ENCODE measurements at regions of chr10 and their contacts with region 1.

Region 1: DNA sequence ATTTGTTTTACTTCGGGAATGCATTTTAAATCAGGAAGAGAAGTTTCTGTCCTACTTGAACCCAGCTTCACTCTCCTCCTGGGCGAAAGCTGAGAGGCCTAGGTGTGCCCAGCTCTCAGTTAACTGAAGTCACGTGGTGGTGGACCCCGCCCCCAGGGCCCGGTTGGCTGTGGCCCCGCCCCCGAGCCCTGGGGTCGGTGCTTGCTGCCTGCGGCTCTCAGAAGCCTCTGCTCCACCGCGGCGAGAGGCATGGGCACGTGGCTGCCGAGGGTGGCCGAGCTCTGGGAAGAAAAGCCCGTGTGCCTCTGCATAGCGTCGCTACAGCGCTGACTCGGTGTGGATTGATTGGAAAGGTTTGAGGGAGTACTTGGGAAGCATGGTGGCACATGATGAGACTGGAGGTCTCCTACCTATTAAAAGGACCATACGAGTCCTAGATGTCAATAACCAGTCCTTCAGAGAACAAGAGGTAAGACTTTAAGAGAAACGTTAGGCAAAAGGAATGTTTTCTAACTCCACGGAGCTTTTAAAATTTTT is 34.1 kb downstream of the NET1 start:
- DNase-seq: peak; percentile 83
- H3K4me3 Mint-ChIP-seq: peak overlapping the region; percentile 89
- H3K27ac Mint-ChIP-seq: peak overlapping the region; percentile 87
- H3K4me1 Mint-ChIP-seq: peaks cover 57% of the 10 kb centered on the region
- H3K27me3 Mint-ChIP-seq: no peaks in the 10 kb centered on the region

Region 2: DNA sequence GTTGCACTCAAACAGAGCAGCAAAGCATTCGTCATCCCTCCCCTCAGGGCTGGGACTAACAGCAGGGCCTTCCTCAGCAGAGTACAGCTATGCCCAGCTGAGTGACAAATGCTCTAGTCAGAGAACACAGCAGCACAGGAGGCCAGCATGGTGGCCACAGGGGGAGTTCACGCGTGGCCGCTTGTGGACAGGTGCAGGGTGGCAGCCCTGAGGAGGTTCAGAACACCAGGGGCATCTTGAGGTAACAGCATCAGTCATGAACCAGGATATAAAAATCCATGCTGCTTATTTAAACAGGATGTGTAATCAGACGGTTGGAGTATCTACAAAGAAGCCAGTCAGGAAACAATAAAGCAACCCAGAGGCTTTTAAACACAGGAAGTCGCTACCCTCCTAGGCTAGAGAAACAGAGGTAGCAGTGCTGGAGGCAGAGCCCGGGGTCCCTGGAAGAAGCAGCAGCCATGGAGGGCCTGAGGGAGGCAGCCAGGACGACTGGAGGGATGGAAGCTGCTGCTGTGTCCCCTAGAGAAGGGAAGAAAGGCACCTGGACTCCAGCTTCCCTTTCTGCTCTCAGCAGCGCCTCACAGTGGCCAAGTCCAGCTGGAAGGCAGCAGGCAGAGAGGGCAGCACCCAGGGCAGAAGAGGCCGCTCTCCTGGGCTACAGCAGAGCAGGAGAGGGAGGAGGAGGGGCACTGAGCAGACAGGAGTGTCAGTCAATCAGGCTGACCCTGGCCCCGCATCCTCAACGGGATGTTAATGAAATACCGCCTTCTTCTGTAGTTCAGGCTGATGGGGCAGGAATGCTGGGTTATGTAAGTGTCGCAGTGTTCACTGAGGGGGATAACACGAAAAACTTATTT is 152.5 kb before region 1 on chr10:
- intact Hi-C with region 1: loop called (anchors 5 kb)
- DNase-seq: peak; percentile 66
- H3K4me3 Mint-ChIP-seq: peak overlapping the region; percentile 89
- H3K27ac Mint-ChIP-seq: peak overlapping the region; percentile 92
- H3K4me1 Mint-ChIP-seq: peaks cover 69% of the 10 kb centered on the region
- H3K27me3 Mint-ChIP-seq: no peaks in the 10 kb centered on the region

Region 3: GRCh38 chr10:5317547-5318107 is 128.8 kb before region 1 on chr10:
- intact Hi-C with region 1: no loop called
- DNase-seq: peak; percentile 30
- H3K4me3 Mint-ChIP-seq: peak overlapping the region; percentile 19
- H3K27ac Mint-ChIP-seq: peak overlapping the region; percentile 18
- H3K4me1 Mint-ChIP-seq: peaks cover 34% of the 10 kb centered on the region
- H3K27me3 Mint-ChIP-seq: no peaks in the 10 kb centered on the region

Region 4: DNA sequence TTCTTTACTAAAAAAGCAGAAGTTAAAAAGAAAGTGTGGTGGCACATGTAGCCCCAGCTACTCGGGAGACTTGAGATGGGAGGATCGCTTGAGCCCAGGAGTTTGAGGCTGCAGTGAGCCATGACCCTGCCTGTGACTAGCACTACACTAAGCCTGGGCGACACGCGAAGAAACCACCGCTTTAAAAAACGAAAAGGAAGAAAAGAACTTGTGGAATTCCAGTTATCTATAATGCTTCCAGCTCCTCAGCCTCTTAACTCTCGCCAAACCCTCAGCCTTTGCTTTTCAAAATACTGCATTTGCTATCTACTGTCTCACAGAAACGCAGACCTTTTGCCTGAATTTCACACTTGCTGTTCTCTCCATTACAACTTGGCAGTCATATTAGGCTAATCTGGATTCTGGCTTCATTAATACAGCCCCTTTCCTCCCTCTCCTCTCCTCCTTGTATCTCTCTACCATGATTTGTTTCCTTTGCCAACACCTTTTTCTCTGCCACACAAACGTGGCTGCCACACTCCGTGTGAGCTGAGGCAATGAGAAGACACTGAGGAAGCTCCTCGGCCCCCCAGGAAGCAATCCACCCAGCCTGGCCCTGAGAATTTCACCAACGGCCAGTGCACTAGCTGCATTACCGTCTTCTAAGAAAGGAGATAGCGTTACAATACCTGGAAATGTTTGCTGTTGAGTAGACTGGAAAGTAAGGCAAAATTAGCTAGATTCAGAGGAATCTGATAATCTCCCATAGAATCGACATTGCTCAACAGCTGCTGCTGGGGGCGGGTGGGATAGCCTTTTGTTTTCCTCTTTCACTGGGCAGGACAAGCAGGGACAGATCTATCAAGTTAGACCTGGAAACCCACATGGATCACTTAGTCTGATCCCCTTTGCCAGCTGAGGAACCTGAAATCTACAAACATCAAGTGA is 15.7 kb after region 1 on chr10:
- intact Hi-C with region 1: no loop called
- DNase-seq: no peak
- H3K4me3 Mint-ChIP-seq: no peak overlapping the region
- H3K27ac Mint-ChIP-seq: no peak overlapping the region
- H3K4me1 Mint-ChIP-seq: peaks cover 5% of the 10 kb centered on the region
- H3K27me3 Mint-ChIP-seq: no peaks in the 10 kb centered on the region

Region 5: DNA sequence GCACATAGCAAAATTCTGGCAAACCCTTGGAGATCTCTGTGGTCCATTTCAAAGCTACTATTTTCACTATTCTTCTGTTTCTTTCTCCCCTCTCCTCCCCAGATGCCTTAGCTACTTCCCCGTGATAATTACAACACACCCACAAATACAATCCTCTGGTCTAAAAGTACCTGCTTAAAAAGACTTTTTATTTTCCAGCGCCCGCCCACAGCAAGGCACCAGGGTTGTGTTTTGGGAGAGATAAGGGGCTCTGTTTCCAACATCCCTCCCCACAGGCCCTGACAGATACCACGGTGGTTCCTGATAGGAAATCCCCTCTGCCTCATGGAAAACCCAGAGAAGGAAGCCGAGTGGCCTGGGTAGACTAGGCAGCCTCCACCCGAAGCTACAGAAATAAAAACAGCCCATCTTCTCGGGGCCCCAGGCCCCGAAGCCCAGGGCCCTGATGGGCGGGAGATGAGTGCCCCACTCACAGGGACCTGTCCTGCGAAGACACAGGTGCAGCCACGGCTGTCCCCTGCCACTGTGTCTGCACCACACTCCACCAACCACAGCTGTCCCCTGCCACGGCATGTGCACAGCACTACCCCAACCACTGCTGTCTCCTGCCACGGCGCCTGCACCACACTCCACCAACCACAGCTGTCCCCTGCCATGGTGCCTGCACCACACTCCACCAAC is 33.2 kb after region 1 on chr10:
- intact Hi-C with region 1: no loop called
- DNase-seq: no peak
- H3K4me3 Mint-ChIP-seq: no peak overlapping the region
- H3K27ac Mint-ChIP-seq: no peak overlapping the region
- H3K4me1 Mint-ChIP-seq: peaks cover 4% of the 10 kb centered on the region
- H3K27me3 Mint-ChIP-seq: no peaks in the 10 kb centered on the region

Region 6: GRCh38 chr10:5623081-5623748 is 176.8 kb after region 1 on chr10:
- intact Hi-C with region 1: loop called (anchors 1 kb)
- DNase-seq: peak; percentile 73
- H3K4me3 Mint-ChIP-seq: no peak overlapping the region
- H3K27ac Mint-ChIP-seq: no peak overlapping the region
- H3K4me1 Mint-ChIP-seq: peaks cover 8% of the 10 kb centered on the region
- H3K27me3 Mint-ChIP-seq: peaks cover 2% of the 10 kb centered on the region

Region 7: GRCh38 chr10:5684318-5684970 is 238.0 kb after region 1 on chr10 and contains the start of gene TASOR2:
- intact Hi-C with region 1: loop called (anchors 5 kb)
- DNase-seq: peak; percentile 96
- H3K4me3 Mint-ChIP-seq: peak within 1 kb of the TSS; percentile 96
- H3K27ac Mint-ChIP-seq: peak within 1 kb of the TSS; percentile 97
- H3K4me1 Mint-ChIP-seq: peaks cover 51% of the 10 kb centered on the region
- H3K27me3 Mint-ChIP-seq: peaks cover 9% of the 10 kb centered on the region
- total RNA-seq, gene TASOR2: 60.1 and 68.7 TPM in 2 replicates

Region 8: GRCh38 chr10:5873515-5873995 is 427.1 kb after region 1 on chr10:
- intact Hi-C with region 1: loop called (anchors 5 kb)
- DNase-seq: peak; percentile 55
- H3K4me3 Mint-ChIP-seq: no peak overlapping the region
- H3K27ac Mint-ChIP-seq: peak overlapping the region; percentile 4
- H3K4me1 Mint-ChIP-seq: peaks cover 11% of the 10 kb centered on the region
- H3K27me3 Mint-ChIP-seq: no peaks in the 10 kb centered on the region

Region 9: DNA sequence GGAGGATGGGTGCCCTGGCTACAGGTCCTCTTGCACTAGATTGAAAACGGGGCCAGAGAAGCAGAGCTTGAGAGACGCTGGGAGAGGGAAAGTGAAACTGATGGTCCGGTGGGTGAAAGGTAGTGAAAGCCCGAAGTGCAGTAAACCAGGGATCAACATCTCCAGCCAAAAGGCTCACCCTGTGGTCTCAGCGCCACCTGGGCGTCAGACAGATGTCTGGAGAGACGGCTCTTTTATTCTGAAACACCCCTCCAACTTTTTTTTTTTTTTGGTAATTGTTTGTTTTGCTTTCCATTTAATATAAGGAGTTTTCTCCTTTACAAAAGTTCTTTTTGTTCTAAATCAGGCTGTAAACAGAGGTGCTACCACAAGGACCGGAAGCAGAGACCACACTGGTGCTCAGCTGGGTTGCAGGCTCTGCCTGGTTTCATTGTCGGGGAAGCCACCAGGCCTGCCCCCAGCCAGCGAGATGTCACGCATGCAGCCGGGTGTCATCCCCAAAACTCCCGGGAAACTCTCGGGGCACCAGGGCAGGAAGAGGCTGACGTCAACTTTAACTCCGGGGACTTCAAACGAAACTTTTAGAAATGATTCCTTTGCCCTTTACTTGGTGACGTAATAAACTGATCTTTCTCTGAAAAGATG is 604.5 kb after region 1 on chr10:
- intact Hi-C with region 1: loop called (anchors 10 kb)
- DNase-seq: peak; percentile 90
- H3K4me3 Mint-ChIP-seq: peak overlapping the region; percentile 85
- H3K27ac Mint-ChIP-seq: peak overlapping the region; percentile 91
- H3K4me1 Mint-ChIP-seq: peaks cover 83% of the 10 kb centered on the region
- H3K27me3 Mint-ChIP-seq: no peaks in the 10 kb centered on the region

Measured in activated T-helper 2 cell treated with anti-CD3 and anti-CD28 coated beads, Interferon-gamma antibody, Interleukin-2, Interleukin-4, amounts not matched to agents 10 μg/mL and 5 μg/mL and 100 μg/mL, durations not matched to agents 14 hours and 24 hours and 36 hours (primary cell).